Vagina (tissue), 2 donors: ENCODE measurements at regions of chr7 and their contacts with region 1.

Region 1: DNA sequence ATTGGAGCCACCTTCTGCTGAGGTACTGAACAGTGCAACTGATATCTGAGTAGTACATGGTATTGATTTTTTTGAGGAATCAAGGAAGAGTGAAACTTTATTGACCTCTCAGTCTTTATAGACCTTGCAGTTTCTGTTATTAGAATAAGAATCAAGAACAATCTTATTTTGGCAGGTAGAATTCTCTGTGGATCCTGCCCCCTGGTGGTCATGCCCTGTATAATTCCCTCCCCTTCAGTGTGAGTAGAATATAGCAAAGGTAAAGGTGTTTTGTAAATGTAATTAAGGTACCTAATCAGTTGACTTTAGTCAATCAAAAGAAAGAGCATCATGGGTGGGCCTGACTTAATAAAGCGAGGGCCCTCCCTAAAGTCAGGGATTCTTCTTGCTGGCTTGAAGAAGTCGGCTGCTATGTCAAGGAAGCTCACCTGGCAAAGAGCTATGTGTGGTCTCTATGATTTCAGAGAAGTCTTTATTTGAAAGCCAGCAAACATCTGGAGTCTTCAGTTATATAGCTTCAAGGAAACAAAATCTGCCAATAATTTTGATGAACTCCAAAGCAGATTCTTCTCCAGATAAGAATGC is 142.8 kb downstream of the LSM5 start:
- DNase-seq: no peak
- H3K4me3 ChIP-seq: no peak overlapping the region
- H3K27ac ChIP-seq: no peak overlapping the region
- H3K4me1 ChIP-seq: no peaks in the 10 kb centered on the region
- H3K27me3 ChIP-seq: no peaks in the 10 kb centered on the region
- CTCF ChIP-seq: peak in 2 of 3 experiments; percentile 24 to 44
- POLR2A ChIP-seq: no peak

Region 2: DNA sequence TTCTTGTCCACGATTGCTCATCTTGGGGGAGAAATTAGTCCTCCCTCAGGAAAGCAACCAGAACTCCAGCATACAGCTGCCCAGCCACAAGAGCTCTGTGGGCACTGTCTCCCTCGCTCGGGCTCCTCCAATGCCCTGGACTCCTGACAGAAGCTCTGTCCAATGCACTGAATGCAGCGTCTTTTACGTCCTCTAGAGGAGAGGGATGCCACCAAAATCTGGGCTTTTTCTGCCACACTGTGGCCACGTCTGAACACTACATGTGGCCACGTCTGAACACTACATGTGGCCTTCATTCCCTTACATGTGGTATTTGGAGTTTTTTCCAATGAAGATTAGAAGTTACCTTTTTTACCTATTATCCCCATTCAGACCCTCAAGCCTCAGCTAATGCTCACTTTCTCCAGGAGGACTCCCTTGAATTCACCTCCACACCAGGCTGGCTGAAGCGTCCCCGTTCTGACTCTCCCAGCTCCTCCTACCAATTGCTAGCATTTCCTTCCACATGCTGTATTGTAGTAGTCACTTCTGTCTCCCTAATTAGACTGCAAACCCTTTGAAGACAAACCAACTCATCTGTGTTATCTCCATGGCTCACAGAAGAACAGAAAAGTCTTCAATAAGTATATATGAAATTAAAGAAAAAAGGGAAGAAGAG is 142.8 kb before region 1 on chr7:
- intact Hi-C with region 1: loop called (anchors 10 kb)
- DNase-seq: peak; percentile 55 to 87
- H3K4me3 ChIP-seq: peak overlapping the region in 1 of 2 donors; percentile 29
- H3K27ac ChIP-seq: no peak overlapping the region
- H3K4me1 ChIP-seq: no peaks in the 10 kb centered on the region
- H3K27me3 ChIP-seq: no peaks in the 10 kb centered on the region
- CTCF ChIP-seq: peak in 2 of 3 experiments; percentile 54 to 74
- POLR2A ChIP-seq: no peak

Region 3: GRCh38 chr7:32403463-32404229 is 56.3 kb after region 1 on chr7:
- intact Hi-C with region 1: no loop called
- DNase-seq: no peak
- H3K4me3 ChIP-seq: no peak overlapping the region
- H3K27ac ChIP-seq: no peak overlapping the region
- H3K4me1 ChIP-seq: no peaks in the 10 kb centered on the region
- H3K27me3 ChIP-seq: no peaks in the 10 kb centered on the region
- CTCF ChIP-seq: no peak
- POLR2A ChIP-seq: no peak